Psoas muscle (tissue), 8 donors: ENCODE measurements at regions of chr20 and their contacts with region 1.

Region 1: DNA sequence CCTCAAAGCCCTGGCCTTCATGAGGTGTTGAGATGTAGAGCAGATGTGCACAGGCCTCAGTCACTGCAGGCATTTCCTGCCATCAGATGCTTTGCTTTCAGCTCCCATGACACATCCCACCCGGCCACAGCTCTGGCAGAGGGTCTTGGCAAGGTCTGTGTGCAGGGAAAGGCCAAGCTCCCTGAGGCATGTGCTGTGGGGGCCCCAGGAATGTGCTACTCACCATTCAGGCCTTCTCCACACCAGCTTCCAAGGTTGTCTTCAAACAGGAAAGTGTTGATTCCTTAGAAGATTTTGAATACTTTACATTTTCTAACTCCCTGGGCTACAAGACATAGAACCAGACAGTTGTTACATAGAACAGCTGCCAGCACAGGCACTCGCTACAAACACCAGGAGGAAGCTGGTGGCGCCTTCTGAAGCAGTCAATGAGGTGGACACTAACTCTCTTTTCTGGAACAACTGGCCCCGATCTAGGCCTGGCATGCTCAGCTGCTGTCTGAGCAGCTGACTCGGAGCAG is 27.8 kb downstream of the CASS4 start:
- DNase-seq: peak in 1 of 2 donors; percentile 60
- ATAC-seq: peak in 1 of 4 donors; percentile 67
- H3K4me3 ChIP-seq: no peak overlapping the region
- H3K27ac ChIP-seq: no peak overlapping the region
- H3K4me1 ChIP-seq: no peaks in the 10 kb centered on the region
- H3K27me3 ChIP-seq: peaks cover 0 to 1% (median 0%) of the 10 kb centered on the region in 3 donors
- CTCF ChIP-seq: no peak

Region 2: DNA sequence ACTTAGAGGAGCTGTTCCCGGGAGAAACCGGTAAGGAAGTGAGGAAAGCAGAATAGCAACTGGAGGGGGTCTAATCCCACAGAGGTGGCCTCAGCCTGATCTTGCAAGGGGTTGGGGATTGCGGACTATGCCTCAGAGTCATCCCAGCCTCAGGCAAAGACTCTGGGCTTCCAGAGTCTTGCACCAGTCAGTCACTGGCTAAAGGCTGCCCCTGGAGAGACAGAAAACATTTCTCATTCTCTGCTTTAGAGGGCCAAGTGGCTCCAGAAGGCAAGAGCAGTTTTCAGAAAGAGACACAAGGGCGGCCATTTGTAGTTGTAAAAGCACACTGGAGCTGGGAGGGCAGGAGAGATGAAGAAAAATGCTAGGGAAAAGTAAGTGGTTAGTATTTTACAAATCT is 1635.2 kb before region 1 on chr20:
- intact Hi-C with region 1: loop called in 1 of 2 experiments (anchors 10 kb)
- DNase-seq: no peak
- ATAC-seq: no peak
- H3K4me3 ChIP-seq: no peak overlapping the region
- H3K27ac ChIP-seq: no peak overlapping the region
- H3K4me1 ChIP-seq: no peaks in the 10 kb centered on the region
- H3K27me3 ChIP-seq: peaks cover 0 to 3% (median 0%) of the 10 kb centered on the region in 3 donors
- CTCF ChIP-seq: no peak